Left colon (tissue), 2 donors: ENCODE measurements at regions of chr7 and their contacts with region 1.

Region 1: DNA sequence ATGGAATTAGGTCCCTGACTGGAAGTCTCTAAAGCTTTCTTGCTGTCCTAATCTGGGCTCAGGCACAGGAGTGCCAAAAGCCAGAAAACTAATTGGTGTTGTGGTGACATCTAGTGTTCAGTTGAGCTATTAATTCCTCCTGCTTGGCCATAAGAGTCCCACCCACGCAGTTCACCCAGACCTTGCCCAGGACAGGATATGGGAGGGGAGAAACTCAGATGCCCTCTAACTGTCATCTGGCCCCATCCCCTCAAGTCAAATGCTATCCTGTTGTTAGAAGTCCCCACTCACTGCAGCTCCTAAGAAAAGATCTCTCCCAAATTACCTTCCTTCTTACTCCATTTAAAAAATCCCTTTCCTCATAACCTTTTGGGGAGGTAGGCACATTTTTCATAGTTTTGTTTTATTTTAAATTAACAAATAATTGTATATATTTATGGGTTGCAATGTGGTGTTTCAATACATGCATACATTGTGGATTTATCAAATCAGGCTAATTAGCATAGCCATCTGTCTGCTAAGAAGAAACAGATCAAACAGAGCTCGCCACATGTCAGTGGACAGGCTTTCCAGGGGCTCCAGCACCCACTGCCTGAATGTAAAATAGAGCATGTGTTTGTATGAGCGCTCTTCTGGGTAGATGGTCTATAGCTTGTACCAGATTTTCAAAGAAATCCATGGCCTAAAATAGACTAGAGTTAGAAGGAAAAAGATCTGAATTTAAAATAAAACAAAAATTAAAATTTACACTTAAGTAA is 84.0 kb downstream of the GSAP start:
- DNase-seq: peak; percentile 41 to 43
- ATAC-seq: peak; percentile 95

Region 2: DNA sequence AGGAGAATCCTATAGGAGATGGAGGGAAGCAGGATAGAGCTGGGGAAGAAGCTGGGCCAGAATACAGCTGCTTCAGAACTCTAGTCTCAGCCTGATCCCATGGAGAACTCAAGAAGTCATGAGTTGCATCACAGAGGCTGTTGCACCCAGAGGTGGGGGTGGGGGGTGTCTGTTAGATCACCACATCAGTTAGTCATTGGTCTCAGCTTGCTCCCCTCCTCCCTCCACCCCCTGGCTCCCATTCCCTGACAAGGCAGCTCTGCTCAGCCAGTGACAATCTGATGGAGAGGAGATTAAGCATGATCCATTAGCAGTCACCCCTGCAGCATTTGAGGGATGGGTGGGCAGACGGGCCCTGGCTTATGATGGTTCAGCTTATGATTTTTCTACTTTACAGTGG is 74.1 kb before region 1 on chr7:
- intact Hi-C with region 1: loop called in 1 of 2 experiments (anchors 10 kb)
- DNase-seq: no peak
- ATAC-seq: no peak

Region 3: GRCh38 chr7:77651573-77652162 is 319.6 kb after region 1 on chr7:
- intact Hi-C with region 1: no loop called
- DNase-seq: no peak
- ATAC-seq: no peak

Region 4: DNA sequence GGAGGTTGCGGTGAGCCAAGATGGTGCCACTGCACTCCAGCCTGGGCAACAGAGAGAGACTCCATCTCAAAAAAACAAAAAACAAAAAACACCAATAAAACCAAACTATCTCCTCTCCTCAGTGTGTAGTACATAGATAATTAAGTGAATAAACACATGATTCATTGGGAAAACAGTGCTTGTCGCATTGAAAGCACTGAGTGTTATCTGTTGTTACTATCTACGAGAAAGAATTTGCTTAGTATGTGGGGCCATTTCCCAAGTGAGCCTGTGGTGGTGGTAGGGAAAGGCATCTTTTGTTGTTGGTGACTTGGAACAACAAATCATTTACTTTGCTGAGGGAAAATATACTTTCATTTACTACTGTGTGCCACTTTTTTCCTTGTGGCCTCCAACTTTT is 406.8 kb after region 1 on chr7:
- intact Hi-C with region 1: no loop called
- DNase-seq: no peak
- ATAC-seq: no peak